Right ventricle myocardium inferior (tissue), 1 donor: ENCODE measurements at regions of chr17 and their contacts with region 1.

Region 1: DNA sequence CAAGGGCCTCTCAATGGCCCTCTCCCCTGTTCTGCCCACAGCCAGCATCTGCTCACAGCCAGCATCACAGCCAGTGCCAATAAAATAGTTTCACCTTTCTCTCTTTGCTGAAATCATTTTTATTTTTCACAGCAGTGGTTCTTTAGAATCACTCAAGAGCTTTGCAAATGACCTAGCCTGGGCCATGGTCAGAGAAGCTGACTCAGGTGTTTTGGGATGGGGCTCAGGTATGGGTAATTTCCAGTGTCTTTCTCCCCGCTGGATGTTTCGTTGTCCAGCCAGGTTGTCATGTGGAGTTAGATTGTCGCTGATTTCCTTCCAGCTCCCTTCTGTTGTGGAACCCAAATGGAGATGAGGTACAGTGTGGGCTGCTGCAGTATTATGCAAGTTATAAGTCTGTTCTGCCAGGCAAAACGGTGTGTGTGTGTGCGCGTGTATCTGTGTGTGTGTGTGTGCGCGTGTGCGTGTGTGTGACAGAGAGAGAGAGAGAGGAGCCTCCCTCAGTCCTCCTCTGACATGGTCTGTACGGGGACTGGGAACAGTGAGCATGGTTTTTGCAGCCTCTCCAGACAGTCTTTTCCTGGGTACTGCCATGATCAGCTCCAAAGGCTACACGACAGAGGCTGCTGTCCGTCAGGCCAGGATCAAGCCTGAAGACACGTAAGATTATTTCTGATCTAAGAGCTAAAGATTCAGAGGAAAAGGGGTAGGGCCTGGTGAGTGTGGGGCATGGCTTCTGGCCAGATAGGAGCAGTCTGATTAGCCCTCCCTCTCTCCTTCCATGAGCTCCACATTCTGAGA is 1.4 kb upstream of the PMP22 start:
- DNase-seq: no peak
- ATAC-seq: no peak

Region 2: GRCh38 chr17:15291674-15292361 is 25.3 kb after region 1 on chr17:
- intact Hi-C with region 1: loop called (anchors 1 kb)
- DNase-seq: no peak
- ATAC-seq: peak; percentile 71

Region 3: DNA sequence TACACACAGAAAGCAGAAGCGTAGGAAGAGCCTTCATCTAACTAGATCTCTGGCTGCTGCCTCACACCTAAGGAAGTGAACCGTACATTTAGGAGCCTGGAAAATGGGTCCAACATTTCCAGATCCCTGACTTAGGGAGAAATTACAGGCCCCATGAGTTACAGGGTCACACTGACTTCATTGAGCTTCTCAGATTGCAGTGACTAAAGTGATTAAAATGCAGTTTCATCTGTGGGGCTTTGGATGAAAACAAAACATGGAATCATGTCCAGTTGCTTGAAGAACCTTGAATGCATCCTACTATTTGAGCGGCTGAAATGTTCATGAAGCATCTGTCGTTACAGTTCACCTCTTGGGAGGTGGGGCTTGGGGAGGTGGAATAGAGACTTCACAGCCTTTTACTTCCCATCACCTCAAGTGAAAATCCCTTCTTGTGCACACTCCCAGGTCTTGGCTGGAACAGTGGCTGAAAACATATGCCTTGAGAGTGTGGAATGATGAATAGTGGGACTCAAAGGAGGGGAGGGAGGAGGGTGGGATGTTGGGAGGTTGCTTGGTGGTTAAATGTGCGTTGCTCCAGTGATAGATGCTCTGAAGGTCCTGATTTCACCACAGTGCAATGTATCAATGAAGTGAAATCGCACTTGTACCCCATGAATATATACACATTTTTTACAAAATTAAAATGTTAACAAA is 55.2 kb after region 1 on chr17:
- intact Hi-C with region 1: no loop called
- DNase-seq: no peak
- ATAC-seq: no peak